IMR-90 (cell line): ENCODE measurements at regions of chr5 and their contacts with region 1.

Region 1: DNA sequence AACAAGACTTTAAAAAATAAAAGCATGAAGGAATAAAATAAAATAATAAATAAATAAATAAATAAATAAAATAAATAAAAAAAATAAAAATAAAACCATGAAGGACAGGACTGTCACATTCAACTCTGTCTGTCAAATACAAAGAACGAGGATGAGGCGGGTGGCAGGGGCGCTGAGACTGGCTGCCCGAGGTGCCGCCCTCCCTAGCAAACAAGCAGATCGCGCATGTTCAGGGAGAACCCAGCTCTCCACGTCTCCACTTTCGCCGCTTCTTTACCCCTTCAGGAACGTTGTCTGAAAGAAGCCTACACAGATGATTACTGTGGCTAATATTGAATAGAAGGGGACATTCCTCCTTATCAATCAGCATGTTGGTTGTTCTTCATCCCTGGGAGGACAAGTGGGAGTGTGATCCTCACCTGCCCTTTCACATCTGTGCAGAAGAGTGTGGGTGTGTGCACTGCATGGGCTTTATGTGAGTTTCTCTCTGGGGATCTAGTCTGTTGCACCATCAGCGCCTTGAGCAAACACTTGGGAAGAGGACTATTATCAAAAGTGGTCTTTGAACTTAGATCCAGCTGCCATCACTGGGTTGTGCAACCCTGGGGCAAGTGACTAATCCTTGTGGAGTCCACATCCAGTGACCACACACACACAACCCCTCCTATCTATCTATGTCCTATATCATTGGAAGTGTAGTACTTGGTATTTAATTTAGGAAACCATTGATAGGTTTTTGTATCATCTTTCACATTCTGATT is 399.2 kb downstream of the IRX2 start:
- DNase-seq: no peak
- ATAC-seq: no peak
- H3K4me3 ChIP-seq: no peak overlapping the region
- H3K27ac ChIP-seq: no peak overlapping the region
- H3K4me1 ChIP-seq: no peaks in the 10 kb centered on the region
- H3K27me3 ChIP-seq: no peaks in the 10 kb centered on the region
- CTCF ChIP-seq: no peak
- POLR2A ChIP-seq: no peak
- RAD21 ChIP-seq: no peak

Region 2: GRCh38 chr5:2370626-2371418 is 18.5 kb after region 1 on chr5:
- CTCF ChIA-PET with region 1: no interaction called
- POLR2A ChIA-PET with region 1: no interaction called
- dilution Hi-C with region 1: no loop called
- in situ Hi-C with region 1: no loop called
- intact Hi-C with region 1: loop called (anchors 1 kb)
- DNase-seq: no peak
- ATAC-seq: no peak
- H3K4me3 ChIP-seq: no peak overlapping the region
- H3K27ac ChIP-seq: no peak overlapping the region
- H3K4me1 ChIP-seq: no peaks in the 10 kb centered on the region
- H3K27me3 ChIP-seq: no peaks in the 10 kb centered on the region
- CTCF ChIP-seq: no peak
- POLR2A ChIP-seq: no peak
- RAD21 ChIP-seq: no peak

Region 3: DNA sequence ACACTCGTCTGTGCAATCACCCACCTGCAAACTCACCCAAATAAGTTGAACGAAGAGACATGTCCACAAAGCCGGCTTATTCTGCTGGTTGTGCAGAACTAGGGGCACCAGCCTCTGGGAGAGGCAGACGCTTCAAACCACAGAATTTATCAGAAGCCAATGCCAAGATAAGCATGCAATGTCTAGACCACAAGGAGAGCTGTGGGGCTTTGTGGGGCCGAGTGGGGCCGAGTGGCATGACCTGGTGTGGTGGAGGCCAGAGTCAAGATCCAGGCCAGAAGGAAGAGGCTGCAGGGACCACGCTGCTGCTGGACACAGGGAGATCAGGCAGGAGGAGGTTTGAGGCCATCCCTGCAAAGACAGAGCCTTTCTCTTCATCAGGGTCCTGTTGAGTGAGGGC is 140.2 kb after region 1 on chr5:
- CTCF ChIA-PET with region 1: no interaction called
- POLR2A ChIA-PET with region 1: no interaction called
- dilution Hi-C with region 1: no loop called
- in situ Hi-C with region 1: no loop called
- intact Hi-C with region 1: no loop called
- DNase-seq: no peak
- ATAC-seq: no peak
- H3K4me3 ChIP-seq: no peak overlapping the region
- H3K27ac ChIP-seq: no peak overlapping the region
- H3K4me1 ChIP-seq: no peaks in the 10 kb centered on the region
- H3K27me3 ChIP-seq: no peaks in the 10 kb centered on the region
- CTCF ChIP-seq: no peak
- POLR2A ChIP-seq: no peak
- RAD21 ChIP-seq: no peak

Region 4: DNA sequence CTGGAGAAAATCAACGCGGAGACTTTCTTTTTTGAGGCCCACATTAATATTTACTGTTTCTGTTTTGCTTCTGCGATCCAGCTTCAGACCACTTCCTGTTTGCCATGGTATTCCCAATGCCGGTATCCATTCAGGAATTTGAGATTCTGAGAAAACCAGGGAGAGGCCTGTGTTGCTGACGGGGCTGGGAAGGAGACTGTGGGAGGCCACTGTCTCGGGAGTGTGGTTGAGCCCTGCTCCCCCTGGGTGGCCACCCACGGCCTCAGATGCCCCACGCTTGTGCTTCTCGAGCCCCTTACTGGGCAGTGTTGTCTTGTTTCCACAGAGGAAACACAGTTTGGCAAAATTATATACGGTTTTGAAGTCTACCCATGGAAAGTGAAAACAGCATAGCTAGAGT is 802.8 kb after region 1 on chr5:
- CTCF ChIA-PET with region 1: no interaction called
- POLR2A ChIA-PET with region 1: no interaction called
- dilution Hi-C with region 1: no loop called
- in situ Hi-C with region 1: no loop called
- intact Hi-C with region 1: no loop called
- DNase-seq: no peak
- ATAC-seq: no peak
- H3K4me3 ChIP-seq: no peak overlapping the region
- H3K27ac ChIP-seq: no peak overlapping the region
- H3K4me1 ChIP-seq: no peaks in the 10 kb centered on the region
- H3K27me3 ChIP-seq: no peaks in the 10 kb centered on the region
- CTCF ChIP-seq: no peak
- POLR2A ChIP-seq: no peak
- RAD21 ChIP-seq: no peak